ENCODE measurements at regions of chr15 and their contacts with region 1.

Region 1: DNA sequence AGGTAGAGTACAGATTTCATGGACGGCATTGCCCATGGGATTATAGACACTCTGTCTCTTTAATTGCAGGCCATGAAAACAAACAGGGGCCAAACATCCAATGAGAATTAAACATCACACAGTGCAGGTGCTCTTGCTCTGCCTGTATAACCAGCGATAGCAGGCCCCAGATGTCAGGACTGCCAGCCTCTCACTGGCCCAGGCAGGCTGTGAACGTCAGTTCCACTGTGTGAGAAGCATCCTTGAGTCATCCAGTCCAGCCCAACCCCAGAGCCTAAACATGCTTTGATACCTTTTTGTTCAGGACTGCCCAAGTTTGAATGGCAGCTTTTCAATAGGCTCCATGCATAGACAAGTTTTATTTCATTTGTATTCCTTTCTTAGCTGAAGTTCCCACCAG is 189.8 kb downstream of the SLCO3A1 start:
- DNase-seq: no peak
- H3K4me3 ChIP-seq: no peak overlapping the region
- H3K27ac ChIP-seq: no peak overlapping the region
- H3K4me1 ChIP-seq: no peaks in the 10 kb centered on the region
- H3K27me3 ChIP-seq: no peaks in the 10 kb centered on the region
- CTCF ChIP-seq: no peak

Region 2: GRCh38 chr15:91947683-91948608 is 95.3 kb before region 1 on chr15:
- CTCF ChIA-PET with region 1: interaction called, 18 read pairs
- POLR2A ChIA-PET with region 1: no interaction called
- intact Hi-C with region 1: no loop called
- DNase-seq: peak; percentile 69 to 93
- H3K4me3 ChIP-seq: peak overlapping the region; percentile 39; the same call in 1 of the 2 replicates
- H3K27ac ChIP-seq: peak overlapping the region; percentile 100
- H3K4me1 ChIP-seq: peaks cover 94% of the 10 kb centered on the region
- H3K27me3 ChIP-seq: no peaks in the 10 kb centered on the region
- CTCF ChIP-seq: no peak

Region 3: GRCh38 chr15:92029761-92030160 is 13.5 kb before region 1 on chr15:
- CTCF ChIA-PET with region 1: no interaction called
- POLR2A ChIA-PET with region 1: interaction called, 14 read pairs
- intact Hi-C with region 1: no loop called
- DNase-seq: no peak
- H3K4me3 ChIP-seq: no peak overlapping the region
- H3K27ac ChIP-seq: no peak overlapping the region
- H3K4me1 ChIP-seq: no peaks in the 10 kb centered on the region
- H3K27me3 ChIP-seq: no peaks in the 10 kb centered on the region
- CTCF ChIP-seq: no peak